ENCODE measurements at regions of chr7 and their contacts with region 1.

Region 1: GRCh38 chr7:12067141-12067831 is 143.8 kb upstream of the TMEM106B start:
- DNase-seq: peak; percentile 72
- H3K4me3 ChIP-seq: no peak overlapping the region
- H3K27ac ChIP-seq: no peak overlapping the region
- H3K4me1 ChIP-seq: no peaks in the 10 kb centered on the region
- H3K27me3 ChIP-seq: no peaks in the 10 kb centered on the region
- CTCF ChIP-seq: peak; percentile 64

Region 2: GRCh38 chr7:12244129-12244528 is 176.8 kb after region 1 on chr7:
- intact Hi-C with region 1: loop called (anchors 10 kb)
- DNase-seq: peak; percentile 25
- H3K4me3 ChIP-seq: no peak overlapping the region
- H3K27ac ChIP-seq: no peak overlapping the region
- H3K4me1 ChIP-seq: no peaks in the 10 kb centered on the region
- H3K27me3 ChIP-seq: no peaks in the 10 kb centered on the region
- CTCF ChIP-seq: peak; percentile 18

Region 3: GRCh38 chr7:12322284-12322902 is 255.1 kb after region 1 on chr7:
- intact Hi-C with region 1: loop called (anchors 2 kb)
- DNase-seq: no peak
- H3K4me3 ChIP-seq: no peak overlapping the region
- H3K27ac ChIP-seq: no peak overlapping the region
- H3K4me1 ChIP-seq: no peaks in the 10 kb centered on the region
- H3K27me3 ChIP-seq: no peaks in the 10 kb centered on the region
- CTCF ChIP-seq: peak; percentile 51